ENCODE measurements at regions of chr1 and their contacts with region 1.

Region 1: DNA sequence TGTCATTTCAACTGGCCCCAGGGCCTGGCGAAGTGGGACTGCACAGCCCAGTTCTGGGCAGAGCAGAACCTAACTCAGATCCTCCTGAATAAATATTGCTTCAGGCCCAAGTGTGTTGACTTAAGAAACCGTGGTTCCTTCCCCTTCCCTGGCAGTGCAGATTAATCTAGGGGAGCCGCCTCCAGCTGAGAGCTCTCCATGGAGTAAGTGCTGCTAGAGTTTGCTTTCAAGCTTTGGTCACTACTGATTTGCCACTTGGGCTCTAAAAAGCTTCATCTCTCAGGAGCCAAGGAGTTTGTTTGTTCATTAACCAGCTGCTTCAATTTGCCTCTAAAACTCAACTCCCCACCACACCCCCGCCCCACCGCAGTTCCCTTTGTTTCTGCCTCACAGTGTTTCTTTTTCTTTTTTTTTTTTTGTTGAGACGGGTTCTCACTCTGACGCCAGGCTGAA is 112.1 kb downstream of the DTL start:
- DNase-seq: peak in 1 of 2 experiments; percentile 19
- H3K4me3 ChIP-seq: no peak overlapping the region
- H3K4me3 Mint-ChIP-seq: no peak overlapping the region
- H3K27ac Mint-ChIP-seq: peak overlapping the region; percentile 39
- H3K4me1 ChIP-seq: peaks cover 7% of the 10 kb centered on the region; the same call in 1 of the 2 replicates
- H3K4me1 Mint-ChIP-seq: no peaks in the 10 kb centered on the region
- H3K27me3 ChIP-seq: no peaks in the 10 kb centered on the region
- H3K27me3 Mint-ChIP-seq: no peaks in the 10 kb centered on the region
- CTCF ChIP-seq: no peak

Region 2: GRCh38 chr1:212167098-212167497 is 19.5 kb after region 1 on chr1:
- CTCF ChIA-PET with region 1: no interaction called
- POLR2A ChIA-PET with region 1: no interaction called
- intact Hi-C with region 1: no loop called
- DNase-seq: no peak
- H3K4me3 ChIP-seq: no peak overlapping the region
- H3K4me3 Mint-ChIP-seq: no peak overlapping the region
- H3K27ac Mint-ChIP-seq: no peak overlapping the region
- H3K4me1 ChIP-seq: no peaks in the 10 kb centered on the region
- H3K4me1 Mint-ChIP-seq: no peaks in the 10 kb centered on the region
- H3K27me3 ChIP-seq: no peaks in the 10 kb centered on the region
- H3K27me3 Mint-ChIP-seq: no peaks in the 10 kb centered on the region
- CTCF ChIP-seq: no peak

Region 3: GRCh38 chr1:212218911-212219310 is 71.3 kb after region 1 on chr1:
- CTCF ChIA-PET with region 1: no interaction called
- POLR2A ChIA-PET with region 1: no interaction called
- intact Hi-C with region 1: loop called (anchors 2 kb)
- DNase-seq: no peak
- H3K4me3 ChIP-seq: no peak overlapping the region
- H3K4me3 Mint-ChIP-seq: peak overlapping the region; percentile 62
- H3K27ac Mint-ChIP-seq: peak overlapping the region; percentile 97
- H3K4me1 ChIP-seq: peaks cover 61% of the 10 kb centered on the region
- H3K4me1 Mint-ChIP-seq: peaks cover 41% of the 10 kb centered on the region
- H3K27me3 ChIP-seq: no peaks in the 10 kb centered on the region
- H3K27me3 Mint-ChIP-seq: no peaks in the 10 kb centered on the region
- CTCF ChIP-seq: no peak